A549 (cell line): ENCODE measurements at regions of chr6 and their contacts with region 1.

Region 1: GRCh38 chr6:100001915-100002388 is 7.9 kb upstream of the MCHR2 start:
- DNase-seq: peak; percentile 10 to 50
- ATAC-seq: peak; percentile 82 to 88
- H3K4me3 ChIP-seq: no peak overlapping the region
- H3K27ac ChIP-seq: no peak overlapping the region
- H3K4me1 ChIP-seq: no peaks in the 10 kb centered on the region
- CTCF ChIP-seq: peak; percentile 69
- EP300 ChIP-seq: no peak
- POLR2A ChIP-seq: no peak
- RAD21 ChIP-seq: peak; percentile 72 to 73

Region 2: GRCh38 chr6:99836471-99836870 is 165.5 kb before region 1 on chr6:
- CTCF ChIA-PET with region 1: no interaction called
- POLR2A ChIA-PET with region 1: no interaction called
- DNase-seq: peak in 1 of 2 experiments; percentile 13
- ATAC-seq: no peak
- H3K4me3 ChIP-seq: no peak overlapping the region
- H3K27ac ChIP-seq: peak overlapping the region in 1 of 2 experiments; percentile 23; a peak in 1 of 6 replicates
- H3K4me1 ChIP-seq: no peaks in the 10 kb centered on the region
- CTCF ChIP-seq: no peak
- EP300 ChIP-seq: no peak
- POLR2A ChIP-seq: no peak
- RAD21 ChIP-seq: no peak

Region 3: GRCh38 chr6:100099189-100100074 is 97.5 kb after region 1 on chr6:
- CTCF ChIA-PET with region 1: interaction called, 28 read pairs
- POLR2A ChIA-PET with region 1: interaction called, 3 read pairs
- DNase-seq: peak in 1 of 2 experiments; percentile 20
- ATAC-seq: peak in 1 of 2 experiments; percentile 62; a peak in 4 of 6 replicates
- H3K4me3 ChIP-seq: no peak overlapping the region
- H3K27ac ChIP-seq: no peak overlapping the region
- H3K4me1 ChIP-seq: no peaks in the 10 kb centered on the region
- CTCF ChIP-seq: peak; percentile 57
- EP300 ChIP-seq: no peak
- POLR2A ChIP-seq: no peak
- RAD21 ChIP-seq: peak; percentile 39 to 49

Region 4: GRCh38 chr6:100335991-100336390 is 334.0 kb after region 1 on chr6:
- CTCF ChIA-PET with region 1: no interaction called
- POLR2A ChIA-PET with region 1: no interaction called
- DNase-seq: no peak
- ATAC-seq: no peak
- H3K4me3 ChIP-seq: no peak overlapping the region
- H3K27ac ChIP-seq: no peak overlapping the region
- H3K4me1 ChIP-seq: no peaks in the 10 kb centered on the region
- CTCF ChIP-seq: no peak
- EP300 ChIP-seq: no peak
- POLR2A ChIP-seq: no peak
- RAD21 ChIP-seq: no peak

Region 5: GRCh38 chr6:100657678-100658330 is 655.9 kb after region 1 on chr6:
- CTCF ChIA-PET with region 1: interaction called, 11 read pairs
- POLR2A ChIA-PET with region 1: no interaction called
- DNase-seq: peak in 1 of 2 experiments; percentile 18
- ATAC-seq: peak in 1 of 2 experiments; percentile 58; a peak in 1 of 6 replicates
- H3K4me3 ChIP-seq: no peak overlapping the region
- H3K27ac ChIP-seq: no peak overlapping the region
- H3K4me1 ChIP-seq: peaks cover under 1% of the 10 kb centered on the region; the same call in 1 of the 3 replicates
- CTCF ChIP-seq: peak; percentile 86
- EP300 ChIP-seq: no peak
- POLR2A ChIP-seq: no peak
- RAD21 ChIP-seq: peak; percentile 79 to 86